ENCODE measurements at regions of chr5 and their contacts with region 1.

Region 1: DNA sequence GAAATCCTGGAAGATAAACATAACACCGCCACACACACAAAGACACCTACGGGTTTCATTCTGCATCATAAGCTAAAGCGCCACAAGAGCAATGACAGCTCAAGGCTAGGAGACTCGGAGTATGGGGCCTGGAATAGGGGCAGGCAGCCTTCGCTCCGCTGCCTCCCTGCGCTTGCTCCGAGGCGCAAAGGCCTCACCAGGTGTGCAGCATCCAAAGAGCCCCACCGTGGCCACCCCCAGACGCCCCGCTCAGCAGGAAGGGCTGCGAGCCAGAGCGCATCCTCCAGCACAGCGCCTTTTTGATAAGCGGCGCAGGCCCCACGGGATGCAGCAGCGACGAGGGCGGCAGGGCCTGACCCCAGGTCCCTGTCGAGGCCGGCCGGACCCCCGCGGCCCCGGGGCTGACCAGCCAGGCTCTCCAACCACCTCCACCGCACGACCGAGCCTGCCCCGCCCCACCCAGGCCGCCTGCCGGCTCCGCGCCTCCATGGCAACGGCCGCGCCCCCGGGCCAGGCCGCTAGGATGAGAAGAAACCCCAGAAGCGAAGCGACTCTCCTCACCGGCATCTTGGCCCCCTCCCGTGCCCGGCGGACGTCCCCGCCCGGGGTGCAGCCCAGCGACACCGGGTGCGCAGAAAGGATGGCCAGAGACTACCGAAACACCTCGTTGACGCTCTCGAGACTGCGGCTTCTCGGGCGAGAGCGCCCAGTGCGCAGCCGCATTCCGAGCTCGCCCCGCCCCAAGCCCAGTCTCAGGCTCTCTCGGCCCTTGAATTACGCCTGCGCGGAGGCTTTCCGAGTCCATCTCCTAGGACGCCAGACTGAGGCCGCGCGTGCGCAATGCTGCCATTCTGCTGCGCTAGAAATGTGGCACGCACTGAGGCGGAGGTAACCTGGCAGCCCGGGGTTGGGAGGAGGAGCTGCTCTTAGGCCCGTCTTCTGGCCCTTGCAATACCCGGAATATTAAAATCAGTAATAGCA is at the start of gene KIF3A:
- DNase-seq: peak; percentile 99
- ATAC-seq: peak; percentile 94
- H3K4me3 Mint-ChIP-seq: peak within 1 kb of the TSS; percentile 77
- H3K27ac Mint-ChIP-seq: peak within 1 kb of the TSS; percentile 70
- H3K4me1 Mint-ChIP-seq: peaks cover 30% of the 10 kb centered on the region
- H3K27me3 Mint-ChIP-seq: no peaks in the 10 kb centered on the region
- total RNA-seq, gene KIF3A: 7.1 to 10.6 TPM

Region 2: DNA sequence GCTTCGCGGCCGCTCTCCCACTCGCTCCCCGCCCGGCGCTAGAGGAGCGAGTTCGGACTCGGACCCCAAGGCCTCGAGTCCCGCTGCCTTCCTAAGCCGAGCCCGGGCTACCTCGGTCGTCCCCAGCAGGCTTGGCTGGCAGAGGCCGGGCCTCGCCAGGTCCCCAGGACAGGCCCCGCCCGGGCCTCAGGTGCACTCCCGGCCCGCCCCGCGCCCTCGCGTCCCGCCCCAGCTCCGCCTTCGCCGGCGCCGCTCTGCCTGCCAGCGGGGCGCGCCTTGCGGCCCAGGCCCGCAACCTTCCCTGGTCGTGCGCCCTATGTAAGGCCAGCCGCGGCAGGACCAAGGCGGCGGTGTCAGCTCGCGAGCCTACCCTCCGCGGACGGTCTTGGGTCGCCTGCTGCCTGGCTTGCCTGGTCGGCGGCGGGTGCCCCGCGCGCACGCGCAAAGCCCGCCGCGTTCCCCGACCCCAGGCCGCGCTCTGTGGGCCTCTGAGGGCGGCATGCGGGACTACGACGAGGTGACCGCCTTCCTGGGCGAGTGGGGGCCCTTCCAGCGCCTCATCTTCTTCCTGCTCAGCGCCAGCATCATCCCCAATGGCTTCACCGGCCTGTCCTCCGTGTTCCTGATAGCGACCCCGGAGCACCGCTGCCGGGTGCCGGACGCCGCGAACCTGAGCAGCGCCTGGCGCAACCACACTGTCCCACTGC is 367.5 kb before region 1 on chr5 and contains the start of gene SLC22A5:
- CTCF ChIA-PET with region 1: no interaction called
- POLR2A ChIA-PET with region 1: no interaction called
- intact Hi-C with region 1: loop called in 1 of 2 experiments (anchors 1 kb)
- DNase-seq: peak; percentile 84
- ATAC-seq: peak; percentile 97
- H3K4me3 Mint-ChIP-seq: peak within 1 kb of the TSS; percentile 66
- H3K27ac Mint-ChIP-seq: peak within 1 kb of the TSS; percentile 80
- H3K4me1 Mint-ChIP-seq: peaks cover 24% of the 10 kb centered on the region
- H3K27me3 Mint-ChIP-seq: no peaks in the 10 kb centered on the region
- total RNA-seq, gene SLC22A5: 3.7 to 4.9 TPM

Region 3: GRCh38 chr5:132556763-132557477 is 180.2 kb before region 1 on chr5 and contains the start of gene RAD50:
- CTCF ChIA-PET with region 1: interaction called, 4 read pairs
- POLR2A ChIA-PET with region 1: no interaction called
- intact Hi-C with region 1: loop called in 1 of 2 experiments (anchors 1 kb)
- DNase-seq: peak; percentile 96
- ATAC-seq: peak; percentile 99
- H3K4me3 Mint-ChIP-seq: peak within 1 kb of the TSS; percentile 96
- H3K27ac Mint-ChIP-seq: peak within 1 kb of the TSS; percentile 98
- H3K4me1 Mint-ChIP-seq: peaks cover 21% of the 10 kb centered on the region
- H3K27me3 Mint-ChIP-seq: no peaks in the 10 kb centered on the region
- total RNA-seq, gene RAD50: 46.0 to 51.3 TPM

Region 4: DNA sequence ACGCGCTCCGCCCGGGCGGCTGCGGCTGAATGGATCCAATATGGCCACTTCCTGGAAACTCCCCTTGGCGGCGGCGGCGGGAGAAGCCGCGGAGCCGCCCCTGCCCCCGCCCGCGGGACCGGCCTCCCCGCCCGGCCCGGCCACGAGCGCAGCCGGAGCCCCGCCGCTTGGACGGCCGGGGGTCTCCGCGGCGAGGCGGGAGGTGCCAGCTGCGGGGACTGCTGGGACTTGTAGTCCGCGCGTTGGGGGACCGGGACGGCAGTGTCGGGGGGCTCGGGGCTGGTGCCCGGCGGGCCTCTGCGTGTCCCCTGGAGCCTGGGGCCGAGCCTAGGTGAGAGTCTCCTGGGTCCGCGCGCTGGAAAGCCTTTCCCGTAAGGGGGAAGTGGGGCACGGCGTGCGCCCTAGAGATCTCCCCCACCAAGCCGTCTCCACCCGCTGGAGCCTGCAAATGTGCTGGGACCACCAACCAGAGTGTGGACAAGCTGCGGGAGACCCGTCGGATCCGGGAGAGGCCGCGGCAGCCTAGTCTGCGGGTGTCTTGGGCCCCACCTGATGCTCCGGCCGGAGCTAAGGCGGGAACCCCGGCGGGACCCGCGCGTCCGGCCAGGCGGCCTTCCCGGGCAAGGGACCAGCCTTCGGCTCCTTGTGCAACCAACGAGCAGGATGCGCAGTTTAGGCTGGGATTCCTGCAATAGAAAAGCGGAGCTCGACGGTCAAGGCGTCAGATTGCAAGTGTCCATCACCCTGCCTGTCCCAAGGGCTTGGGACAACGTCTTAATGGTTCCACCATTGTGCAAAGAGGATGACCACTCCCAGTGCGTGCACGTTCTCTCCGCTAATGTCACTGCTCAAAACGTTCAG is 40.3 kb after region 1 on chr5 and contains the start of gene SEPTIN8:
- CTCF ChIA-PET with region 1: no interaction called
- POLR2A ChIA-PET with region 1: no interaction called
- intact Hi-C with region 1: loop called in 1 of 2 experiments (anchors 1 kb)
- DNase-seq: peak; percentile 67
- ATAC-seq: peak; percentile 79
- H3K4me3 Mint-ChIP-seq: peak within 1 kb of the TSS; percentile 65
- H3K27ac Mint-ChIP-seq: peak within 1 kb of the TSS; percentile 8
- H3K4me1 Mint-ChIP-seq: peaks cover 7% of the 10 kb centered on the region
- H3K27me3 Mint-ChIP-seq: peaks cover 37% of the 10 kb centered on the region
- total RNA-seq, gene SEPTIN8: 18.6 to 19.9 TPM

Region 5: GRCh38 chr5:132963175-132964104 is 226.3 kb after region 1 on chr5 and contains the start of gene AFF4:
- CTCF ChIA-PET with region 1: no interaction called
- POLR2A ChIA-PET with region 1: interaction called, 4 read pairs
- intact Hi-C with region 1: loop called in 1 of 2 experiments (anchors 1 kb)
- DNase-seq: peak; percentile 94
- ATAC-seq: peak; percentile 92
- H3K4me3 Mint-ChIP-seq: peak within 1 kb of the TSS; percentile 96
- H3K27ac Mint-ChIP-seq: peak within 1 kb of the TSS; percentile 99
- H3K4me1 Mint-ChIP-seq: peaks cover 32% of the 10 kb centered on the region
- H3K27me3 Mint-ChIP-seq: no peaks in the 10 kb centered on the region
- total RNA-seq, gene AFF4: 20.9 to 29.3 TPM

Measured in activated CD4-positive, alpha-beta T cell treated with anti-CD3 and anti-CD28 coated beads for 36 hours (primary cell).